ENCODE measurements at regions of chr22 and their contacts with region 1.

Region 1: DNA sequence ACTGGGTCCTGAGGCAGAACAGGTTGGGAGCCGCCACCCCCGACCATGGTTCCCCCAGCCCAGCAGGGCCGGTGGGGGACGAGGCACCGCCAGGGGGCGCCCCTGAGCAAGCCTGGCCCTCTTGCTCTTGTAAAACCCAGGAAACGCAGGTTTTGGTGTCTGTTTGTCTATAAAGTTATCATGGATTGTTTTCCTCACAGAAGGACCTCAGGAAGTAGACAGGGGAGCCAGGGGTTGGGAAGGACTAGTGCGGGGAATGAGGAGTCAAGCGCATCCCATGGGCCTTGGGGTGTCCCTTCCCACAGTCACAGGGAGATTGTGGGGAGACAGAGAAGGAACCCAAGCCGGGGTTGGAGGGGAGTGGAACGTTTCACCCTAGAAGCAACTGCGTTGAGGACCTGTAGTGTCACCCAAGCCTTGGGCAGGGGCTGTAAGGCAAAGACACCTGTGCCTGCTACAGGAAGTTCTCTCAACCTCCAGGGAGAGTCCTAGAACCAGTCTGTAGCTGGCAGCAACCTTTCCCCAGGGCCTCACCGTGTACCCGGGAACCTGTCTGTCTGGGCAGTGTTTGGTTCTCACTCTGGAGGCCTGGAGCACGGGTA is 26.4 kb downstream of the KCTD17 start:
- DNase-seq: peak; percentile 94
- ATAC-seq: peak; percentile 18
- H3K4me3 Mint-ChIP-seq: no peak overlapping the region
- H3K27ac Mint-ChIP-seq: peak overlapping the region; percentile 94
- H3K4me1 Mint-ChIP-seq: peaks cover 59% of the 10 kb centered on the region
- H3K27me3 Mint-ChIP-seq: peaks cover 10% of the 10 kb centered on the region

Region 2: GRCh38 chr22:36659762-36660509 is 418.0 kb before region 1 on chr22:
- CTCF ChIA-PET with region 1: no interaction called
- POLR2A ChIA-PET with region 1: no interaction called
- intact Hi-C with region 1: no loop called
- DNase-seq: peak; percentile 82
- ATAC-seq: peak; percentile 91
- H3K4me3 Mint-ChIP-seq: no peak overlapping the region
- H3K27ac Mint-ChIP-seq: no peak overlapping the region
- H3K4me1 Mint-ChIP-seq: no peaks in the 10 kb centered on the region
- H3K27me3 Mint-ChIP-seq: peaks cover 48% of the 10 kb centered on the region

Region 3: GRCh38 chr22:36725356-36726006 is 352.5 kb before region 1 on chr22:
- CTCF ChIA-PET with region 1: no interaction called
- POLR2A ChIA-PET with region 1: no interaction called
- intact Hi-C with region 1: no loop called
- DNase-seq: no peak
- ATAC-seq: no peak
- H3K4me3 Mint-ChIP-seq: no peak overlapping the region
- H3K27ac Mint-ChIP-seq: no peak overlapping the region
- H3K4me1 Mint-ChIP-seq: no peaks in the 10 kb centered on the region
- H3K27me3 Mint-ChIP-seq: peaks cover 19% of the 10 kb centered on the region

Region 4: GRCh38 chr22:37037669-37038068 is 40.3 kb before region 1 on chr22:
- CTCF ChIA-PET with region 1: no interaction called
- POLR2A ChIA-PET with region 1: no interaction called
- intact Hi-C with region 1: no loop called
- DNase-seq: no peak
- ATAC-seq: no peak
- H3K4me3 Mint-ChIP-seq: no peak overlapping the region
- H3K27ac Mint-ChIP-seq: no peak overlapping the region
- H3K4me1 Mint-ChIP-seq: peaks cover 8% of the 10 kb centered on the region
- H3K27me3 Mint-ChIP-seq: peaks cover 10% of the 10 kb centered on the region

Region 5: GRCh38 chr22:37088108-37088605 is 10.2 kb after region 1 on chr22:
- CTCF ChIA-PET with region 1: interaction called, 6 read pairs
- POLR2A ChIA-PET with region 1: no interaction called
- intact Hi-C with region 1: loop called in 1 of 2 experiments (anchors 1 kb)
- DNase-seq: peak; percentile 83
- ATAC-seq: peak; percentile 88
- H3K4me3 Mint-ChIP-seq: peak overlapping the region; percentile 69
- H3K27ac Mint-ChIP-seq: peak overlapping the region; percentile 86
- H3K4me1 Mint-ChIP-seq: peaks cover 24% of the 10 kb centered on the region
- H3K27me3 Mint-ChIP-seq: no peaks in the 10 kb centered on the region

Region 6: GRCh38 chr22:37095113-37095512 is 17.1 kb after region 1 on chr22:
- CTCF ChIA-PET with region 1: interaction called, 4 read pairs
- POLR2A ChIA-PET with region 1: interaction called, 3 read pairs
- intact Hi-C with region 1: loop called in 1 of 2 experiments (anchors 1 kb)
- DNase-seq: peak; percentile 87
- ATAC-seq: peak; percentile 87
- H3K4me3 Mint-ChIP-seq: no peak overlapping the region
- H3K27ac Mint-ChIP-seq: peak overlapping the region; percentile 79
- H3K4me1 Mint-ChIP-seq: peaks cover 31% of the 10 kb centered on the region
- H3K27me3 Mint-ChIP-seq: peaks cover 11% of the 10 kb centered on the region

Region 7: GRCh38 chr22:37148742-37149665 is 71.0 kb after region 1 on chr22:
- CTCF ChIA-PET with region 1: interaction called, 12 read pairs
- POLR2A ChIA-PET with region 1: interaction called, 11 read pairs
- intact Hi-C with region 1: loop called (anchors 1 to 2 kb)
- DNase-seq: no peak
- ATAC-seq: no peak
- H3K4me3 Mint-ChIP-seq: peak overlapping the region; percentile 84
- H3K27ac Mint-ChIP-seq: peak overlapping the region; percentile 91
- H3K4me1 Mint-ChIP-seq: peaks cover 56% of the 10 kb centered on the region
- H3K27me3 Mint-ChIP-seq: no peaks in the 10 kb centered on the region

Region 8: DNA sequence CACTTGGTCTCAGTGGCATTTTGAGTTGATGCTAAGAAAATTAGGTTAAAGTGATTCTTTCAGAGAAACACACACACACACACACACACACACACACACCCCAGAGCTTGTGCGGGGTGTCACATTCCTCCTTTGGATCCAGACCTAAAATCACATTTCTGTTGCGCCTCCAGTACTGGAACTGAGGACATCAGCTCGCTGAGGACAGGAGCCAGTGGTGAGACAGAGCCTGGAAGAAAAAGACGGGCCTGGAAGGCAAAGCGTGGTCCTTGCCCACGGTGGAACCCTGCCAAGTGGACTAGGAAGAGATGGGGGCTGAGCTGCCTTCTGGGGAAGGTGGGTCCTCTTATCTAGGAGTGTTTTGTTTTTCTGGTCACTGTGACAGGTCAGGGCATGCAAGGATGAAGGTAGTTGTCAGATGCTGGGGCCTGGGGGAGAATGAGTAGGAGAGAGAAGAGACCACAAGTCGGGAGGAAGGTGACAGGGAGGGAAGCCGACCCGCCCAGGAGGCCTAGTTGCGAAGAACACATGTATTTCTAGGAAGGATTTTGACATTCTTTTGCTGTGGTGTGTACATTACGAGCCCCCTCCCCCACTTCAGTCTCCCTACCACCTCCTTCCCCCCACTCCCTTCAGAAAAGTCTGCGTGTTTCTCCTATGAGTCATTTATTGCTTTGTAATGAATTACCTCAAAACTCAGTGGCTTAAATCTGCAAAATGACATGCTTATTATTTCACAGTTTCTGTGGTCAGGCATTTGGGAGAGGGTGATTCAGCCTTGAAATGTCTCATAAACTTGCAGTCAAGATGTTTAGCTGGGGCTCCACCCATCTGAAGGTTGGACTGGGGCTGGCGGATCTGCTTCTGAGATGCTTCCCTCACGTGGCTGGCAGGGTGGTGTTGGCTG is 354.1 kb after region 1 on chr22:
- CTCF ChIA-PET with region 1: no interaction called
- POLR2A ChIA-PET with region 1: no interaction called
- intact Hi-C with region 1: no loop called
- DNase-seq: peak; percentile 76
- ATAC-seq: peak; percentile 83
- H3K4me3 Mint-ChIP-seq: no peak overlapping the region
- H3K27ac Mint-ChIP-seq: peak overlapping the region; percentile 34
- H3K4me1 Mint-ChIP-seq: peaks cover 17% of the 10 kb centered on the region
- H3K27me3 Mint-ChIP-seq: peaks cover 31% of the 10 kb centered on the region

Measured in activated CD4-positive, alpha-beta T cell treated with anti-CD3 and anti-CD28 coated beads for 36 hours (primary cell).